Transverse colon (tissue), 4 donors: ENCODE measurements at regions of chr4 and their contacts with region 1.

Region 1: DNA sequence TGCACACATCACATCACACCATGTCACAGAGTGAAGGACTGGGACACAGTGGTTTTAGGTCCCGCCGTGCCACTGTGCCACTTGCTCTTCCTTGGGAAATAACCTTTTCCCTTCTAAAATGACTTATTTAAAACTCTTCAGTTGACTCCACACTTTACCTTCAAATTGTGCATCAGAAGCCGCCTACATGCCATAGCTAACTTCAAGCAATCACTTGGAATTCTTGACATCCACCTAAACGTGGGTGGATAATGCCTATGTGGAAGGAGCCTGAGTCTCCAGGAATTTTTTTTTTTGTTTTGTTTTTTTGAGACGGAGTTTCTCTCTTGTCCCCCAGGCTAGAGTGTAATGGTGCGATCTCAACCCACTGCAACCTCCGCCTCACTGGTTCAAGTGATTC is 777.4 kb upstream of the TENM3 start:
- DNase-seq: no peak
- H3K4me3 ChIP-seq: no peak overlapping the region
- H3K27ac ChIP-seq: no peak overlapping the region
- H3K4me1 ChIP-seq: no peaks in the 10 kb centered on the region
- H3K27me3 ChIP-seq: no peaks in the 10 kb centered on the region
- CTCF ChIP-seq: no peak
- EP300 ChIP-seq: no peak
- POLR2A ChIP-seq: no peak

Region 2: GRCh38 chr4:181443021-181443420 is 22.8 kb before region 1 on chr4:
- in situ Hi-C with region 1: no loop called
- intact Hi-C with region 1: loop called (anchors 2 kb)
- DNase-seq: no peak
- H3K4me3 ChIP-seq: no peak overlapping the region
- H3K27ac ChIP-seq: no peak overlapping the region
- H3K4me1 ChIP-seq: no peaks in the 10 kb centered on the region
- H3K27me3 ChIP-seq: no peaks in the 10 kb centered on the region
- CTCF ChIP-seq: no peak
- EP300 ChIP-seq: no peak
- POLR2A ChIP-seq: no peak